PC-3 (cell line): ENCODE measurements at regions of chr3 and their contacts with region 1.

Region 1: GRCh38 chr3:127747723-127748521 is 74.4 kb downstream of the MGLL start:
- DNase-seq: peak; percentile 92
- ATAC-seq: peak; percentile 73
- H3K4me3 ChIP-seq: peak overlapping the region; percentile 33; the same call in 1 of the 2 replicates
- H3K27ac ChIP-seq: peak overlapping the region; percentile 95
- H3K4me1 ChIP-seq: peaks cover 58% of the 10 kb centered on the region
- H3K27me3 ChIP-seq: no peaks in the 10 kb centered on the region
- CTCF ChIP-seq: peak; percentile 43

Region 2: GRCh38 chr3:127667119-127667681 is 80.7 kb before region 1 on chr3:
- CTCF ChIA-PET with region 1: no interaction called
- POLR2A ChIA-PET with region 1: no interaction called
- intact Hi-C with region 1: no loop called
- DNase-seq: no peak
- ATAC-seq: no peak
- H3K4me3 ChIP-seq: no peak overlapping the region
- H3K27ac ChIP-seq: no peak overlapping the region
- H3K4me1 ChIP-seq: peaks cover 6% of the 10 kb centered on the region
- H3K27me3 ChIP-seq: no peaks in the 10 kb centered on the region
- CTCF ChIP-seq: no peak

Region 3: DNA sequence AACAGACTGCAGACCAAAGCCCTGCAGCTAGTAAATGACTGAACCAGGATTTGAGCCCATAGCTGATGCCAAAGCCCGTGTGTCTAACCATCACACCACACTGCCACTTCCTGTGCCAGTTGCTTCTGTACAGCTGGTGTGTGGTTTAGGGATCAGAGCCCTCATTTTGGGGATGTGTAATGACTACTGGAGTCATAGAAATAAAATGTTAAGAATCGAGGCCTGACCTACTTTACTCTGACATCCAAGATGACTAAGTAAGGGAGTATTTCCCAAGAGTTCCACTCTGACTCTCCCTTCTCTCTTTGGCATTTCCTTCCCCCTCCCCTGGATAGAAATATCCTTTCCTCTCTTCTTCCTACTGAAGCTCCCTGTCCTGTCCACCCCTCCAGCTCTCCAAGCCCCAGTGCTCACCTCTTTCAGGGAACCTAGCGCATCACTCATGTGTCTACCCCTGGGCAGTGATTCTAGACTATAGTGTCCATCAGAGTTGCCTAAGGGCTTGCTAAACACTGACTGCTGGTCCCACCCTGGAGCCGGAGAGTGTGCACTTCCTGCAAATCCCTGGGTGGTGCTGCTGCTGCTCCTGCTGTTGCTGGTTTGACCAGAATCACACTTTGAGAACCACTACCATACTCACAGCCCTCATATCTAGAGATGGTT is 20.6 kb after region 1 on chr3:
- CTCF ChIA-PET with region 1: no interaction called
- POLR2A ChIA-PET with region 1: no interaction called
- intact Hi-C with region 1: loop called (anchors 1 kb)
- DNase-seq: peak; percentile 95
- ATAC-seq: peak; percentile 91
- H3K4me3 ChIP-seq: no peak overlapping the region
- H3K27ac ChIP-seq: peak overlapping the region; percentile 88
- H3K4me1 ChIP-seq: peaks cover 28% of the 10 kb centered on the region
- H3K27me3 ChIP-seq: no peaks in the 10 kb centered on the region
- CTCF ChIP-seq: no peak

Region 4: DNA sequence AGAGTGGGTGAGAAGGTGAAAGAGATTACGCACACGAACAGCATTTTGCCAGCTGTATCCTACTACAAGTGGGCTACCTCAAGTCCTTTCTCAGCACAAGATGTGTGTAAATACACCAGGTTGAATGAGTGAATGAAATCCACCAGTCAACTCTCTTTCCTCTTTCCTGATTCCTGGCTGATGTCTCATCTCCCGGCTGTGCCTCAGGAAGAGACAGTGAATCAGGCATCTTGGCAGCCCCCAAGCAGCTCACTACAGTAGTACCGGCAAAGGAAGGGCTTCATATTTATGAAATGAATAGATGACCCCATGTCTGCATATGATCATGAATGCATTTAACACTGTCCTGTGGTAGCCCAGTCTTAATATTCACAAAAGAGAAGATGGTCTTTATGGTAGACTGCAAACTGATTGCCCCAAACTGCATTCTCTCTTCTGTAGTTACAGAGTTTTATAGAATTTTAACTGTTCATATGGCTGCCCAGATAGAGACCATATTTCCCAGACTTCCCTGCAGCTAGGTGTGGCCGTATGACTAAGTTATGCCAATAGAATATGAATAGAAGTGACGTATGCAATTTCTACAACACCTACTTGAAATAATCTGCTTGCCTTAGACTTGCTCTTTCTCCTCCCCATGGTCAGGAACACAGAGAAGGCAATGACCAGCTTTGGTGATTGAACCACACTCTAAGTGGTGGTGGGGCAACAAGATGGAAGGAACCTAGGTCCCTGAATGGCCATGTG is 51.7 kb after region 1 on chr3:
- CTCF ChIA-PET with region 1: no interaction called
- POLR2A ChIA-PET with region 1: interaction called, 6 read pairs
- intact Hi-C with region 1: loop called (anchors 2 kb)
- DNase-seq: peak; percentile 89
- ATAC-seq: peak; percentile 79
- H3K4me3 ChIP-seq: peak overlapping the region; percentile 20; the same call in 1 of the 2 replicates
- H3K27ac ChIP-seq: peak overlapping the region; percentile 99
- H3K4me1 ChIP-seq: peaks cover 48% of the 10 kb centered on the region
- H3K27me3 ChIP-seq: no peaks in the 10 kb centered on the region
- CTCF ChIP-seq: no peak

Region 5: GRCh38 chr3:127814325-127814781 is 66.4 kb after region 1 on chr3:
- CTCF ChIA-PET with region 1: no interaction called
- POLR2A ChIA-PET with region 1: no interaction called
- intact Hi-C with region 1: no loop called
- DNase-seq: no peak
- ATAC-seq: no peak
- H3K4me3 ChIP-seq: no peak overlapping the region
- H3K27ac ChIP-seq: peak overlapping the region; percentile 88
- H3K4me1 ChIP-seq: peaks cover 55% of the 10 kb centered on the region
- H3K27me3 ChIP-seq: no peaks in the 10 kb centered on the region
- CTCF ChIP-seq: no peak

Region 6: DNA sequence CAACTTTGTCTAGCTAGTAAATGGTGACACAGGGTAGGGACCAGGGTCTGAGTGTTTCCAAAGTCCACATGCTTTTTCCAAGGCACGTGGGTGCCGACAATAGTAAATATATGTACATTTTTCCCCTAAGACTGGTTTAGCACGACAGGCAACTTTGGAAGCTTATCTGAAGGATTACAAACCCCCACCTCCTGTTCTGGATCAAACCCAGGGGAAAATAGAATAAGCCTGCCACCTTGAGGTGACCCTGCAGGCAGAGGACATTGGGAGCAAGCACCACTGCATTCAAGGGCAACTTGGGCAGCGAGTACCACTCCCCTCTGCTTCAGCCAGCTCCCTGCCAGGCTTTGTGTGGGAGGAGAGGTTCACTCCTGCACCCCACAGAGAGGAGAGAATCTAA is 211.9 kb after region 1 on chr3:
- CTCF ChIA-PET with region 1: no interaction called
- POLR2A ChIA-PET with region 1: no interaction called
- intact Hi-C with region 1: loop called (anchors 5 kb)
- DNase-seq: peak; percentile 62
- ATAC-seq: peak; percentile 32
- H3K4me3 ChIP-seq: no peak overlapping the region
- H3K27ac ChIP-seq: no peak overlapping the region
- H3K4me1 ChIP-seq: peaks cover 30% of the 10 kb centered on the region
- H3K27me3 ChIP-seq: no peaks in the 10 kb centered on the region
- CTCF ChIP-seq: peak; percentile 59